Transverse colon (tissue), 4 donors: ENCODE measurements at regions of chr7 and their contacts with region 1.

Region 1: DNA sequence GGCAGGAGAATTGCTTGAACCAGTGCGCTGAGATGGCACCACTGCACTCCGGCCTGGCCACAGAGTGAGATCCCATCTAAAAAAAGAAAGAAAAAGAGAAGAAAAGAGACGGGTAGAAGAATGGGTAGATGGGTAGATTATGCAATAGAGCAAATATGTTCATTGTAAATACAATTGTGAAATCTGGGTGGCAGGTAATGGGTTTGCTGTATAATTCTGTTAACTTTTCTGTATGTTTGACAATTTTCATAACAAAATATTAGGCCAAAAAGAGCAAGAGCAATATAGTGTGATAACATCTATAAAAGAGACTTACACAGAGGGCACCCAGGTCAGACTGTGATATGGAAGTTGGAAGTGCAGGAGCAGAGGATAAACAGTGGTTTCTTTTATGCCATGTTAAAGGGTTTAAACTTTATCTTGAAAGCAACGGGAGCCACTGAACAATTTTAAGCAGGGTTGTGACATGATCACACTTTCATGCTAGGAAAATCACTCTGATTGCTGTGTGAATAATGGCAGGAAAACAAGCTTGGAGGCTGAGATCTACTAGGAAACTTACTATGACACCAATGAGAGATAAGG is 6.7 kb upstream of the COL28A1 start:
- DNase-seq: no peak
- H3K4me3 ChIP-seq: no peak overlapping the region
- H3K27ac ChIP-seq: no peak overlapping the region
- H3K4me1 ChIP-seq: peaks cover 0 to 4% (median 0%) of the 10 kb centered on the region in 4 donors
- H3K27me3 ChIP-seq: no peaks in the 10 kb centered on the region
- CTCF ChIP-seq: no peak
- EP300 ChIP-seq: no peak
- POLR2A ChIP-seq: no peak

Region 2: DNA sequence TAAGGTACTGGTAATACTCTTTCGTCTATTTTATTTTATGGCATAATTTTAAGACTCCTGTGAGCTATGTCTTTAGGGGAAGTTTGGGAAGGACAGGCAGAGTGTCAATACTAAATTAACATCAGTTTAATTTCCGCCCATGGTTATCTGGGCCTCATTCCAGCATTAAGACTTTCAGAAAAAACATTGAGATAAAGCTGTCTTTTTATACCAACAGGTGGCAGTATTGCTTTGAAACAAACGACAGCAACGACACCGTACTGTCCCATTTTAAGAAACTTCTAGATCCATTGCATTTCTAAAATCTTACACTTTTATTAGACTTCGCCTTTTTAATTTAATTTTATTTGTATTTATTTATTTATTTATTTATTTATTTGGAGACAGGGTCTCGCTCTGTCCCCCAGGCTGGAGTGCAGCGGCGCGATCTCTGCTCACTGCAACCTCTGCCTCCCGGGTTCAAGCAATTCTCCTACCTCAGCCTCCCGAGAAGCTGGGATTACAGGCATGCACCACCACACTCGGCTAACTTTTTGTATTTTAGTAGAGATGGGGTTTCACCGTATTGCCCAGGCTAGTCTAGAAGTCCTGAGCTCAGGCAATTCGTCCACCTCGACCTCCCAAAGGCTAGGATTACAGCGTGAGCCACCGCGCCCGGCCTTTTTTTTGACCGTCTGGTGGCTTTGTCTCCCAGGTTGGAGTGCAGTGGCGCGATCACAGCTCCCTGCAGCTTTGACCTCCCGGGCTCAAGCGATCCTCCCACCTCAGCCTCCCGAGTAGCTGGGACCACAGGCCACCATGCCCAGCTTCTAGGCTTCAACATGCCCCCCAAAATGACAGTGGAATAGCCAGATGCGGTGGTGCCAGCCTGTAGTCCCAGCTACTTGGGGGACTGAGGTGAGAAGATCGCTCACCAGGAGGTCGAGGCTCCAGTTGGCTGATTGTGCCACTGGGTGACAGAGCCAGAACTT is 438.7 kb before region 1 on chr7:
- in situ Hi-C with region 1: loop called in 3 of 4 experiments (anchors 5 to 10 kb)
- intact Hi-C with region 1: no loop called
- DNase-seq: no peak
- H3K4me3 ChIP-seq: peak overlapping the region in 2 of 4 donors; percentile 3 to 11
- H3K27ac ChIP-seq: peak overlapping the region in 2 of 4 donors; percentile 2
- H3K4me1 ChIP-seq: peaks cover 0 to 6% (median 4%) of the 10 kb centered on the region in 4 donors
- H3K27me3 ChIP-seq: no peaks in the 10 kb centered on the region
- CTCF ChIP-seq: peak; percentile 65 to 75 (median 68)
- EP300 ChIP-seq: no peak
- POLR2A ChIP-seq: no peak

Region 3: DNA sequence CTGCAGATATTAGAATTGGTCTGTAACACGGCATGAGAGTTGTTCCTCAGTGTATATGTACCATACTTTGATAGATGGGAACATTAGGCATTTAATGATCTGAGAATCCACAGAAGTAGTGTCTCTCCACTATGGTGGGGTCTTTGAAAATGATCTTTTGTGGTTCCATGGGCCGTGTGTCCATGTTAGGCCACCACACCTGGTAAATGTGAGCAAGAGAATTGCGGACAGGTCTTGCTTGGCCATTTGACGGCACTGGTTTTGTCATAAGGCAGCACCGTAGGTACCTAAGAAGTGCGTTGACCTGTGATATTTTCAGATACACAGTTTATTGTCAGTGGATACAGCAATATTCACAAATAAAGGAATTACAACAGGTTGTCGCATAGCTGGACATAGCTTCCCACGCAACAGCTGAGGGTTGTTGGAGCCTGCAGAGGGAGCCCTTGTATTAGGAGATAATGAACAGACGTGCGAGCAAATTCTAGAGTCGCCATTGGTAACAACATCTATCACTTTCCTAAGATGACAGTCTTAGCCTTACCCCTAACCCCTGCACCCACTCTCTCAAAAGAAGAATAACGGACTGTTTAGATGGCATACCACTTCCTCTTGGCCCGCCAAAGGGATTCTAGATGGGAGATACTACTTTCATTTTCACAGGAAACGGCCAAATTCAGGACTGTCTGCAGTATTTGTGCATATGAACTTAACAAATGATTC is 118.0 kb before region 1 on chr7:
- in situ Hi-C with region 1: loop called in 2 of 4 experiments (anchors 5 kb)
- intact Hi-C with region 1: no loop called
- DNase-seq: peak; percentile 74
- H3K4me3 ChIP-seq: peak overlapping the region; percentile 22 to 51 (median 29)
- H3K27ac ChIP-seq: no peak overlapping the region
- H3K4me1 ChIP-seq: no peaks in the 10 kb centered on the region
- H3K27me3 ChIP-seq: no peaks in the 10 kb centered on the region
- CTCF ChIP-seq: peak; percentile 68 to 78 (median 72)
- EP300 ChIP-seq: no peak
- POLR2A ChIP-seq: no peak